Common myeloid progenitor, CD34-positive (primary cell): ENCODE measurements at regions of chr13 and their contacts with region 1.

Region 1: GRCh38 chr13:112997268-112997667 is 28.3 kb downstream of the MCF2L start:
- DNase-seq: no peak
- H3K4me3 ChIP-seq: no peak overlapping the region
- H3K27ac ChIP-seq: no peak overlapping the region
- H3K4me1 ChIP-seq: peaks cover 0 to 45% (median 33%) of the 10 kb centered on the region in 4 experiments
- H3K27me3 ChIP-seq: peaks cover 0 to 3% (median 0%) of the 10 kb centered on the region in 5 experiments

Region 2: GRCh38 chr13:112968908-112969691 is 28.2 kb before region 1 on chr13 and contains the start of gene MCF2L:
- CTCF ChIA-PET with region 1: interaction called, 15 read pairs
- POLR2A ChIA-PET with region 1: interaction called, 7 read pairs
- DNase-seq: peak; percentile 72 to 86 (median 84)
- H3K4me3 ChIP-seq: peak within 1 kb of the TSS in 6 of 7 experiments; percentile 40 to 75 (median 61)
- H3K27ac ChIP-seq: no peak within 1 kb of the TSS
- H3K4me1 ChIP-seq: peaks cover 0 to 24% (median 19%) of the 10 kb centered on the region in 4 experiments
- H3K27me3 ChIP-seq: peaks cover 0 to 24% (median 12%) of the 10 kb centered on the region in 5 experiments

Region 3: DNA sequence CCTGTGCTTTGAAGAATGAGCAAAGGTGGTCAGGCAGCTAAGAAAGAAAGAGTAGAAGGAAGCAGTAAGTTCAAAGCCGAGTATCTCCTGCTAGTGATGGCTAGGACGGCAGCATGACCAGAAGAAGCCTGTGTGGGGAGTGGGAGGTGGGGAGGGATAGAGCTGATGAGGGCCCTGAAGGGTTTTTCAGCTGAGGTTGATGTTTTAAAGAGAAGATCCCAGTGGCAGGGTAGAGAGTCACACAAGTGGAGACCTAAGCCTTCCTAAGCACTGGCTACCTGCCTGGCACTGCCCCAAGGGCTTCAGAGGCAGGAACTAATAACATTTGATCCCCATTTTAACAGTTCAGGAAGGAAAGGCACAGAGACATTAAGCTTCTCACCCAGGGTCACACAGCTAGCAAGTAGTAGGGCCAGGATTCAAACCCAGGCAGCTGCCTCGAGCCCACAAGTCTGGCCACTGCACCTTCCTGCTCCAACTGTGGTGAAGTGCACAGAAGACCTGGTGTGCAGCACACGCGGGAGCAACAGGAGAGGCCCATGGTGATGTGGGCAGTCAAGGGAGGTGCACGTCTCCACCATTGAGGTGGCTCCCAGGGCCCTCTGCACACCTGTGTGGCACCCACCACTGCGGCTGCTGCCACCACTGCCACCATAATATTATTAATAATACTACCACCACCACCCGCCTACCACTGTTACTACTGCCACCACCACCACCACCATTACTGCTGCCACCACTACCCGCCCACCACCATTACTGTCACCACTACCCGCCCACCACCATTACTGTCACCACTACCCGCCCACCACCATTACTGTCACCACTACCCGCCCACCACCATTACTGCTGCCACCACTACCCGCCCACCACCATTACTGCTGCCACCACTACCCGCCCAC is 234.3 kb after region 1 on chr13:
- CTCF ChIA-PET with region 1: no interaction called
- POLR2A ChIA-PET with region 1: no interaction called
- DNase-seq: no peak
- H3K4me3 ChIP-seq: no peak overlapping the region
- H3K27ac ChIP-seq: no peak overlapping the region
- H3K4me1 ChIP-seq: no peaks in the 10 kb centered on the region
- H3K27me3 ChIP-seq: no peaks in the 10 kb centered on the region

Region 4: GRCh38 chr13:113275387-113275786 is 278.1 kb after region 1 on chr13:
- CTCF ChIA-PET with region 1: no interaction called
- POLR2A ChIA-PET with region 1: no interaction called
- DNase-seq: peak; percentile 63 to 74 (median 71)
- H3K4me3 ChIP-seq: peak overlapping the region in 1 of 7 experiments; percentile 34
- H3K27ac ChIP-seq: no peak overlapping the region
- H3K4me1 ChIP-seq: peaks cover 0 to 19% (median 14%) of the 10 kb centered on the region in 4 experiments
- H3K27me3 ChIP-seq: peaks cover 0 to 4% (median 0%) of the 10 kb centered on the region in 5 experiments